ENCODE measurements at regions of chr2 and their contacts with region 1.

Region 1: DNA sequence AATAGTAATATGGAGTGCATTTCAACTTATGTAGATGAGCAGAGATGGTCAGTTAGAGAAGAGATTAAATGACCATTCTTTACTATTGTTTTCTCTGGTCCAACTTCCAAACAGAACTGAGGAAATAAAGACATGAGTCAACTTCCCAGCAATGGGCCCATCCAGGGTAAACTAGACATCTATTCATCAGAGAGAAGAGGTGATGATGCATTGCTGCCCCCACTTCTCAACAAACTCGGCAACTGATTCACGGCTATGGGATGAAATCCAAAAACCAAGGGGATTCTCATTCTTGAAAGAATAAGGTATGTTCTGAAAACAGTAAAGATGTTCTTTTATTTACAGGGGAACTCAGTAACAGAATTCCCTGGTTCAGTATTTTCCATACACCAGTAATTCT is 190.7 kb downstream of the RDH14 start:
- DNase-seq: peak; percentile 69
- H3K4me3 ChIP-seq: no peak overlapping the region
- H3K27ac ChIP-seq: no peak overlapping the region
- H3K4me1 ChIP-seq: peaks cover 19% of the 10 kb centered on the region
- H3K27me3 ChIP-seq: no peaks in the 10 kb centered on the region

Region 2: DNA sequence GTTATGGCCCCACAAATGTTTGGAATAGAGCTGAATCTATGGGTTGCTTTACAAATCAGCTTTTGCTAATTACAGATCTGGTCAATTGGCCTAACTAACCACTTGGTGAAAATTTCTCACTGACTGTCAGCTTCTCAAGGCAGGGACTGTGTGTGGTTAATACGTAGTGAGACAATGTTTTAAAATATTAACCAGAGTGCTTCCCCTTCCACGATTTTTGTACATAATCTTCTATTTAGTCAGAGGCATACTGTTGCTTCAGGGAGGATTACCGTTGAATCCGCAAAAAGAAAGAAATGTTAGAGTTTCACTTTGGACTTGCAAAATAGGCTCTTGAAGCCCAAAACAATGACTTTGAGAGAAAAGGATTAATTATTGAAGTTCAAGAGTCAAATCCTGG is 506.2 kb before region 1 on chr2:
- in situ Hi-C with region 1: loop called (anchors 5 kb)
- DNase-seq: no peak
- H3K4me3 ChIP-seq: no peak overlapping the region
- H3K27ac ChIP-seq: no peak overlapping the region
- H3K4me1 ChIP-seq: no peaks in the 10 kb centered on the region
- H3K27me3 ChIP-seq: peaks cover 10% of the 10 kb centered on the region

Region 3: GRCh38 chr2:18473241-18474181 is 103.8 kb after region 1 on chr2:
- in situ Hi-C with region 1: no loop called
- DNase-seq: peak; percentile 98
- H3K4me3 ChIP-seq: no peak overlapping the region
- H3K27ac ChIP-seq: peak overlapping the region; percentile 75
- H3K4me1 ChIP-seq: peaks cover 34% of the 10 kb centered on the region
- H3K27me3 ChIP-seq: no peaks in the 10 kb centered on the region; the same call in 1 of the 2 replicates

Region 4: GRCh38 chr2:19235308-19235707 is 865.5 kb after region 1 on chr2:
- in situ Hi-C with region 1: no loop called
- DNase-seq: peak; percentile 84
- H3K4me3 ChIP-seq: no peak overlapping the region
- H3K27ac ChIP-seq: 0 out of 2 replicates have a peak overlapping the region, but pooled peaks have one; percentile 11
- H3K4me1 ChIP-seq: peaks cover 11% of the 10 kb centered on the region
- H3K27me3 ChIP-seq: no peaks in the 10 kb centered on the region

Measured in GM23248 (cell line).